Right cardiac atrium (tissue), 5 donors: ENCODE measurements at regions of chr17 and their contacts with region 1.

Region 1: GRCh38 chr17:45640141-45640850 is 143.8 kb upstream of the CRHR1 start:
- DNase-seq: peak; percentile 72 to 84 (median 75)
- ATAC-seq: peak; percentile 62 to 88
- H3K4me3 ChIP-seq: no peak overlapping the region
- H3K27ac ChIP-seq: no peak overlapping the region
- H3K4me1 ChIP-seq: no peaks in the 10 kb centered on the region
- H3K27me3 ChIP-seq: no peaks in the 10 kb centered on the region

Region 2: GRCh38 chr17:45584092-45585036 is 55.9 kb before region 1 on chr17:
- intact Hi-C with region 1: no loop called
- DNase-seq: peak; percentile 54 to 84 (median 72)
- ATAC-seq: peak; percentile 55 to 75
- H3K4me3 ChIP-seq: peak overlapping the region; percentile 69
- H3K27ac ChIP-seq: peak overlapping the region; percentile 10
- H3K4me1 ChIP-seq: no peaks in the 10 kb centered on the region
- H3K27me3 ChIP-seq: no peaks in the 10 kb centered on the region

Region 3: DNA sequence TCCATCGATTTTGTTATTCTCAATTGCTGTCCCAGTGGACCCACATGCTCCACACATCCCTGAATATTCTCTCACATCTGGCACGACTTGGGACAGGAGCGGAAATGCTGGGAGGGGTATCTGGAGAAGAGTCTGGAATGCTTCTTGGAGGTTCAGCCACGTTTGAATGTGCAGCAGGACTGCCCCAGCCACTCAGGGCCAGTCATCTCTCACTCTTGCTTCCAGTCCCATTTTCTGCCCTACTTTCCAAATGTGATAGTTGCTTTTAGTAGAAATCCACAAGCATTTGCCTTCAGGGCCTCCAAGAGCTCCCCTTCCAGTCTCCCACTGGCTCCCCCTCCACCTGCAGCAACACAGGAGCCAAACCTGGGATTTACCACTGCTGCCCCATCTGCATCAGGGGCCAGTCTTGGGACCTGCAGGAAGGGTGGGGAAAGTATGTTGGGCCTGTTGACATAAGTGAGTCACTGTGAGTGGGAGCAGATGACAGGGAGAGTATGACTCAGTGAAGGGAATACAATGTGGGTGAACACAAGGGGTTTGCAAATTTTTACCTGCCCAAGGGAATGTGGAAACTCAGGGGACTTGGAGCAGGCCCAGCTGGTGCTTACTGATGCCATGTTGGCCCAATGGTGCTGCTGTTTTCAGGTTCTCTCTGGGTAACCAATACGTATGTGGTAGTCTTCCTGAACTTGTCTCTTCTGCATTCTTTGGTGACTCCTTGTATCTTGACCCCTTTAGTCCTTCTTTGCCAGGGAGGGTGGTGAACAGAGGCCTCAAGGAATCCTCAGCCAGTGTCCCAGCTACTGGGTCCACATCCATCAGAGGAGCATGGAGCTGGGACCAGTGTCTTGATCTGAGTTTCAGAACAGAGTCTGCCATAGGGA is 65.1 kb after region 1 on chr17:
- intact Hi-C with region 1: no loop called
- DNase-seq: no peak
- ATAC-seq: no peak
- H3K4me3 ChIP-seq: no peak overlapping the region
- H3K27ac ChIP-seq: no peak overlapping the region
- H3K4me1 ChIP-seq: no peaks in the 10 kb centered on the region
- H3K27me3 ChIP-seq: no peaks in the 10 kb centered on the region

Region 4: DNA sequence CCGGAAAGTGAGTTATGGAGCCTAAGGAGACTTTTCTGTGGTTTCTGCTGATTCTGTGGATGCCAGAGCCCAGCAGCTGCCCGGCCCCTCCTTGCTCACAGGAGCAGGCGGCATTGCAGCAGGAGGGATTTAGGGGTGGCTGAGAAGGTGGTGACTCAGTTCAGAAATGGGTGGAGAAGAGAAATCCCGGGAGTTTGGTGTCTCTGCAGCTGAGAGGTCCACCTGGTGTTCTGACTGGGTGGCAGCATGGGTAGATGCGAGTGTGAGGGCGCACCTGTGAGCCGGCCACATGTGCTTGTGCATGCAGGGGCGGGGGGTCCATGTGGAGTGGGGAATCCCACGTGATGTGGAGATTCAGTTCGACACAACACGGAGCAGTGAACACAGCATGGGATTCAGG is 188.3 kb after region 1 on chr17:
- intact Hi-C with region 1: loop called (anchors 2 to 10 kb)
- DNase-seq: peak in 1 of 3 donors; percentile 31
- ATAC-seq: no peak
- H3K4me3 ChIP-seq: no peak overlapping the region
- H3K27ac ChIP-seq: no peak overlapping the region
- H3K4me1 ChIP-seq: no peaks in the 10 kb centered on the region
- H3K27me3 ChIP-seq: no peaks in the 10 kb centered on the region

Region 5: DNA sequence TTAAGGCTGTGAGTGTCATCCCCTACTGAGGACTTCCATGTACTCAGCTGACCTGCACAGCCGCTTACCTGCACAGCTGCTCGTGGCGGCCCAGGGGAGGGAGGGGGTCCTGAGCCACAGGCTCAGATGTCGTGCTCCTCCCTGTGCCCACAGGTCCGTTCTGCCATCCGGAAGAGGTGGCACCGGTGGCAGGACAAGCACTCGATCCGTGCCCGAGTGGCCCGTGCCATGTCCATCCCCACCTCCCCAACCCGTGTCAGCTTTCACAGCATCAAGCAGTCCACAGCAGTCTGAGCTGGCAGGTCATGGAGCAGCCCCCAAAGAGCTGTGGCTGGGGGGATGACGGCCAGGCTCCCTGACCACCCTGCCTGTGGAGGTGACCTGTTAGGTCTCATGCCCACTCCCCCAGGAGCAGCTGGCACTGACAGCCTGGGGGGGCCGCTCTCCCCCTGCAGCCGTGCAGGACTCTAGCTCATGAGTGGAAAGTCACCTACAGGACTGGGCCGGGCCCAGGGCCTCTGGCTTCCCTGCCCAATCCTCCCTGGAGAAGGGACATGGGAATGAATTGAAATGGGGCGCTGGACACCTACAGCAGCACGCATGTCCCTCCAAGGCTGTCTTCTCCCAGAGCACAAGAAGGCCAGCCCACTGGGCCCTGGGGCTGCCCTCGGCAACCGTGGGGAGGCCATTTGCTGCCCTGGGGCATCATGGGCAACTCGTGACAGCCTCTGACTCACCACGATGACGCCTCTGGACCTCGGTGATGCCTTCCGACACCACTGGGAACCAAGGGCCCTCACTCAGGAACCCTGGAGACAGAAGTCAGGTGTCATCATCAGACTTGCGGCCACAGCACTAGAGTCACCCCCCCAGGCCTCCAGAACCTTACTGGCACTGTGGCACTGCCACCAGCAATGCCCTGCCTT is 194.4 kb after region 1 on chr17:
- intact Hi-C with region 1: loop called (anchors 2 to 10 kb)
- DNase-seq: peak in 1 of 3 donors; percentile 35
- ATAC-seq: no peak
- H3K4me3 ChIP-seq: no peak overlapping the region
- H3K27ac ChIP-seq: no peak overlapping the region
- H3K4me1 ChIP-seq: no peaks in the 10 kb centered on the region
- H3K27me3 ChIP-seq: no peaks in the 10 kb centered on the region

Region 6: GRCh38 chr17:46121841-46122485 is 481.7 kb after region 1 on chr17:
- intact Hi-C with region 1: no loop called
- DNase-seq: no peak
- ATAC-seq: no peak
- H3K4me3 ChIP-seq: no peak overlapping the region
- H3K27ac ChIP-seq: no peak overlapping the region
- H3K4me1 ChIP-seq: peaks cover 7% of the 10 kb centered on the region
- H3K27me3 ChIP-seq: no peaks in the 10 kb centered on the region